Activated CD4-positive, alpha-beta T cell treated with anti-CD3 and anti-CD28 coated beads, Interleukin-2, amount 10 ng/mL, durations not matched to agents 7 days and 5 days (primary cell): ENCODE measurements at regions of chr1 and their contacts with region 1.

Region 1: GRCh38 chr1:93061895-93062792 is 16.9 kb upstream of the MTF2 start:
- DNase-seq: peak; percentile 58
- H3K4me3 Mint-ChIP-seq: no peak overlapping the region
- H3K27ac Mint-ChIP-seq: no peak overlapping the region
- H3K4me1 Mint-ChIP-seq: peaks cover 2% of the 10 kb centered on the region
- H3K27me3 Mint-ChIP-seq: peaks cover 31% of the 10 kb centered on the region

Region 2: GRCh38 chr1:93042187-93043056 is 19.7 kb before region 1 on chr1:
- CTCF ChIA-PET with region 1: interaction called, 11 read pairs
- POLR2A ChIA-PET with region 1: no interaction called
- DNase-seq: peak; percentile 71
- H3K4me3 Mint-ChIP-seq: peak overlapping the region; percentile 68
- H3K27ac Mint-ChIP-seq: peak overlapping the region; percentile 96
- H3K4me1 Mint-ChIP-seq: peaks cover 42% of the 10 kb centered on the region
- H3K27me3 Mint-ChIP-seq: no peaks in the 10 kb centered on the region

Region 3: GRCh38 chr1:93078986-93079654 is 17.0 kb after region 1 on chr1 and contains the start of gene MTF2:
- CTCF ChIA-PET with region 1: interaction called, 14 read pairs
- POLR2A ChIA-PET with region 1: no interaction called
- DNase-seq: peak; percentile 95
- H3K4me3 Mint-ChIP-seq: peak within 1 kb of the TSS; percentile 100
- H3K27ac Mint-ChIP-seq: peak within 1 kb of the TSS; percentile 99
- H3K4me1 Mint-ChIP-seq: peaks cover 40% of the 10 kb centered on the region
- H3K27me3 Mint-ChIP-seq: no peaks in the 10 kb centered on the region
- total RNA-seq, gene MTF2: 49.9 to 56.7 TPM